ENCODE measurements at regions of chr3 and their contacts with region 1.

Region 1: GRCh38 chr3:58332575-58333188 is at the start of gene PXK:
- DNase-seq: peak; percentile 78
- H3K4me3 Mint-ChIP-seq: peak within 1 kb of the TSS; percentile 100
- H3K27ac Mint-ChIP-seq: peak within 1 kb of the TSS; percentile 90
- H3K4me1 Mint-ChIP-seq: peaks cover 46% of the 10 kb centered on the region
- H3K27me3 Mint-ChIP-seq: no peaks in the 10 kb centered on the region
- total RNA-seq, gene PXK: 47.6 and 48.7 TPM in 2 replicates

Region 2: GRCh38 chr3:57646723-57647122 is 686.0 kb before region 1 on chr3:
- intact Hi-C with region 1: no loop called
- DNase-seq: no peak
- H3K4me3 Mint-ChIP-seq: no peak overlapping the region
- H3K27ac Mint-ChIP-seq: no peak overlapping the region
- H3K4me1 Mint-ChIP-seq: peaks cover 6% of the 10 kb centered on the region
- H3K27me3 Mint-ChIP-seq: no peaks in the 10 kb centered on the region

Region 3: GRCh38 chr3:58285334-58285733 is 47.3 kb before region 1 on chr3:
- intact Hi-C with region 1: no loop called
- DNase-seq: no peak
- H3K4me3 Mint-ChIP-seq: no peak overlapping the region
- H3K27ac Mint-ChIP-seq: no peak overlapping the region
- H3K4me1 Mint-ChIP-seq: no peaks in the 10 kb centered on the region
- H3K27me3 Mint-ChIP-seq: no peaks in the 10 kb centered on the region

Region 4: GRCh38 chr3:58317811-58318210 is 14.9 kb before region 1 on chr3:
- intact Hi-C with region 1: no loop called
- DNase-seq: no peak
- H3K4me3 Mint-ChIP-seq: no peak overlapping the region
- H3K27ac Mint-ChIP-seq: no peak overlapping the region
- H3K4me1 Mint-ChIP-seq: peaks cover 9% of the 10 kb centered on the region
- H3K27me3 Mint-ChIP-seq: no peaks in the 10 kb centered on the region

Region 5: GRCh38 chr3:58349792-58350626 is 17.3 kb after region 1 on chr3:
- intact Hi-C with region 1: loop called (anchors 1 kb)
- DNase-seq: no peak
- H3K4me3 Mint-ChIP-seq: peak overlapping the region; percentile 27
- H3K27ac Mint-ChIP-seq: peak overlapping the region; percentile 82
- H3K4me1 Mint-ChIP-seq: peaks cover 67% of the 10 kb centered on the region
- H3K27me3 Mint-ChIP-seq: no peaks in the 10 kb centered on the region

Region 6: DNA sequence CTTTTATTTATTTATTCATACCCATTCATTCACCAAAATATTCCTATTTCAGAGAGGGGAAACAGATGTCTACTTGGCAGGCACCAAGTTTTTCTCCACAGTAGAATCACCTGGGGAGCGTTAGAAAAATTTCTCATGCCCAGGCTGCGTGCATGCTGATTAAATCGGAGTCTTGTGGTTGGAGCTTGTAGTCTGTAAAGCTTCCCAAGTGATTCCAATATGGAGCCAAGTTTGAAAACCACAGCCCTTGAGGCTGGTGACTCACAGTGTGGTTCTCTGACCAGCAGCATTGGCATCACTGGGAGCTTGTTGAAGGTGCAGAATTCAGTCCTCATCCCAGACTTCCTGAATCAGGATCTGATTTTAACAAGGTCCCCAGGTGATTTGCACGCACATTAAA is 51.2 kb after region 1 on chr3:
- intact Hi-C with region 1: loop called (anchors 10 kb)
- DNase-seq: no peak
- H3K4me3 Mint-ChIP-seq: no peak overlapping the region
- H3K27ac Mint-ChIP-seq: no peak overlapping the region
- H3K4me1 Mint-ChIP-seq: peaks cover 26% of the 10 kb centered on the region
- H3K27me3 Mint-ChIP-seq: no peaks in the 10 kb centered on the region

Measured in activated T-helper 2 cell treated with anti-CD3 and anti-CD28 coated beads, Interferon-gamma antibody, Interleukin-2, Interleukin-4, amounts not matched to agents 10 μg/mL and 5 μg/mL and 100 μg/mL, durations not matched to agents 14 hours and 24 hours and 36 hours (primary cell).